ENCODE measurements at regions of chr1 and their contacts with region 1.

Region 1: DNA sequence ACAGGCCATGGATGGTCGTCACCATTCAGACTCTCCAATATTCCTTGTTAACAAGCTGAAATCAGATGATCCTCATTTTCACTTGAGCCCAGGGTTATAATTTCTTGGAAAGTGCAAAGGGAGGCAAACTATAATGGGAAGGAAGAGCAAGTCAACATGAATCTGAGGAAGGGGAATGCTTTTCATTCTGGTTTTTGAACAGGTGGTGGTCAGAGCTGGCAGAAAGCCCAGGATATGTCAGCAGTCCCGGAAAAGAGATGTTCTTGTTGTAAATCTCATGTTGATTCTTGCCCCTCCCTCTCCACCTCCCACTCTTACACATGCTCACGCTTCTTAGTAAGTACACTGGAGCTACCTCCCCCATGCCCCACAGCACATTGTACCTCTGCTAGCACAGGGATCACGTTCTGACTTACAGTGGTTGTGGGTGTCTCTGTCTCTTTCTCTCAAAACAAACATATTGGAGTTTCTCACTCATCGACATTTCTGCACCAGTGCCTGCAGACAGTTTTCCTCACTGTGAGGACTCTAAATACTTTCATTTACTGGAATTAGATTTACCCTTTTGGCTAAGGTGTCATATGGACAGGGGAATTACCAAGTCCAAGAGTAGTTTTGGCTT is 77.6 kb downstream of the XCL2 start:
- DNase-seq: peak in 2 of 5 donors; percentile 16 to 41
- H3K4me3 ChIP-seq: peak overlapping the region in 1 of 2 donors; percentile 9
- H3K4me3 Mint-ChIP-seq: peak overlapping the region in 6 of 8 donors; percentile 47 to 88 (median 66)
- H3K27ac ChIP-seq: no peak overlapping the region
- H3K27ac Mint-ChIP-seq: peak overlapping the region; percentile 83 to 88 (median 85)
- H3K4me1 ChIP-seq: peaks cover 57% of the 10 kb centered on the region
- H3K4me1 Mint-ChIP-seq: peaks cover 54 to 67% (median 60%) of the 10 kb centered on the region in 4 donors
- H3K27me3 ChIP-seq: no peaks in the 10 kb centered on the region
- H3K27me3 Mint-ChIP-seq: no peaks in the 10 kb centered on the region

Region 2: DNA sequence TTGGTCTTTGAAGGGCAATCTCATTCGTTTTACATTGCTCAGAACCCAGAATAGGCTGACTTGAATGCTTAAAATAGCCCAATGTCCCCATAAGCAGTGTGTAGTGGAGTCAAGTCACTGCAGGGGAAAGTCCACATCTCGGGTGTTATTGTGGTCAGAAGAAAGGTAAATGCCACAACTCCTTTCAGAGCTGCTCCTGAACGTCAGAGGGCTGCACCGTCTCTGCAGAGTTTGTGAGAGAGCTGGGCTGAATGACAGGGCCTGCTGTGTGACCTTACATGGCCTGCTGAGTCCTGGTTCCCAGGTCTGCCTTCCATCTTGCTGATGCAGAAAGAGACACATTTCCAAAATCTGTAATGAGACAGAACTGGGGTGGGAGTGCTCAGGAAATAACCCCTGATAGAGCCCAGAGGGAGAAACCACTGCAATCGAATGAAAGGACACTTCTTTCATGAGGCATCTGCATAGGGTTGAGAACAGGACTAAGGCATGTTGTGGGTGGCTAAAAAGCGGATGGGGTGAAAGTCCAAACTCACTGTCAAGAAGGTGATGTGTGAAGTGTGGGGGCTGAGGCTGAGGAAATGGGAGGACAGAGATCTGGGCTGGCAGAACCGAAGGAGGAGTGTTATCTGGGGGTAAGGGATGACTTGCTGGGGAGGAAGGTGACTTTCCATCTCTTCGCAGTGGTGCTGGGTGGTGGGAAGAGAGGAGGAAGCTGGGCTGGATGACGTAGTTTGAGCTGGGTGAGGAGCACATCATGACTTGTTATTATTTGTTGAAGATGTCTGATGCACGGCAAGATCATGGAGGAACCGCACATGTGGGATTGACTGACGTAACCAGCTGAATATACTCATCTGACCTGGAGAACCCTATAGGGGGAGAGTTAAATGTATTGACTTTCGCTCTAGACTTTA is 43.9 kb after region 1 on chr1:
- CTCF ChIA-PET with region 1: interaction called, 5 read pairs
- POLR2A ChIA-PET with region 1: interaction called, 6 read pairs
- intact Hi-C with region 1: loop called (anchors 5 kb)
- DNase-seq: peak in 1 of 5 donors; percentile 43
- H3K4me3 ChIP-seq: no peak overlapping the region
- H3K4me3 Mint-ChIP-seq: peak overlapping the region in 2 of 8 donors; percentile 17 to 53
- H3K27ac ChIP-seq: no peak overlapping the region
- H3K27ac Mint-ChIP-seq: peak overlapping the region in 3 of 7 donors; percentile 45 to 76 (median 68)
- H3K4me1 ChIP-seq: peaks cover 31% of the 10 kb centered on the region
- H3K4me1 Mint-ChIP-seq: peaks cover 33 to 56% (median 44%) of the 10 kb centered on the region in 4 donors
- H3K27me3 ChIP-seq: no peaks in the 10 kb centered on the region
- H3K27me3 Mint-ChIP-seq: no peaks in the 10 kb centered on the region

Measured in CD4-positive, alpha-beta memory T cell (primary cell).